A549 (cell line): ENCODE measurements at regions of chr1 and their contacts with region 1.

Region 1: DNA sequence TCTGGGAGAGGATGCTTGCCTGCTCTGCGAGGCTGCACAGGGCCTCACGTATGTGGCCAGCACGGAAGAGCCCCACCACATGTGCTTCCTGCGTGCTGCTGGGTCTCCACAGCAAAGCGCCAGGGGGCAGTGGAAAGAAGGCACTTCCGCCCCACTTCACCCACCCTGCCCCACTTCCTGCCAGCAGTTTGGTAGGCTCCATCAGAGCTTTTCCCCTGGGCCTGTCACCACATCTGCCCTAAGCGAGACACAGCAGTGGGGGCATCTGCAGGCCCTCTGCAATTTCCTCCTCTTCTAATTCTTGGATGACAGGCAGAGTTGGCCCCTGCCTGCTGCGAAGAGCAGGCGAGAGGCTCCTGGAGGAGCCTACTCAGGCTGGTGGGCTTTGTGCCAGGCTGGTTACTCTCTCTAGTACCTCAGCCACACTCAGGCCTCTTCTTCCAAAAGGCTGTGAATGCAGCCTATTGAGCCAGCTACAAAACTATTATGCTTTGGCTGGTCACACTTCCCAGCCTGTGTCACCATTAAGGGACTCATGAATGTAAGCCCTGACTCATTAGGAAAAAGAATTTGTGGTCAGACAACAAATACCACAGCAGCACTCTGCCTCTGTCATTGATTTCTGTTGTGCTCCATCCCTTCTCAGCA is 25.0 kb downstream of the CD244 start:
- DNase-seq: no peak
- ATAC-seq: no peak
- H3K4me3 ChIP-seq: no peak overlapping the region
- H3K27ac ChIP-seq: no peak overlapping the region
- H3K4me1 ChIP-seq: no peaks in the 10 kb centered on the region
- CTCF ChIP-seq: no peak
- EP300 ChIP-seq: no peak
- POLR2A ChIP-seq: no peak
- RAD21 ChIP-seq: no peak

Region 2: DNA sequence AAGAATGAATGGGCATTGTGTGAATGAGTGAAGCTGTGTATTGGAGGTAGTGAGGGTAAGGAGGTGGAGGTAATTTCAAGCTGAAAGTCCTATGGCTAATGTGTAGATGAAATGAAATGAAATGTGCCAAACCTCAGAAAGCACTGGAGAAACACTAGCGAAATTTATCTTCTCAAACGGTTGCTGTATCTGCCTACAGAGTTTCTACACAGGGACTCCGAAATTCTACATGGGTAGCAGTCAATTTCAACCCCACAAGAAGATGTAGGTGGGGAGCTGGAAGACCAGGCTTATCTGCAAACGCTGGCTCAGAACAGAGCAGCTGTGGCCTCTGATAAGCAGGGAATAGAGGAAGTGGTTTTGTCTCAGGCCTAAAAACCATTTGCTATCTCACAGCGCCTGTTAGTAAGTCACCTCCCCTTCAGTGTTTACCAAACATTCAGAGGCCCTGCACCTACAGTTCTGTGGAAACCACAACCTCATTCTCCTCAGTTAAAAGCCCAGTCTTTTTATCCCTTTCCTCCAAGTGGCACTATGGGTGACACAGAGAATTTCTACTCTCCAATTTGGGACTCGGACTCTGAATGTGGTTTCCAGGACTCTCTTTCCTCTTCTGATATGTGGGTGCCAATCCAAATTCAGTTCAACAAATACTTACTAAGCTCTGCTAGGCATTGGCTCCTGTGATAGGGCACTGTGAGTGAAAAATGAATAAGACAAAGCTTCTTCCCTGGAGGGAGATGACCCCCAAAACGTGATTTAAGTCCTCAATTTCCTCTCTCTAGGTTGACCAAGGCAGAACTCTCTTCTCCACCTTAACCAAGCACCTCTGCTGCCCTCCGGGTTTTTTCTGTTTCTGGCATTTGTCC is 297.5 kb before region 1 on chr1:
- CTCF ChIA-PET with region 1: no interaction called
- POLR2A ChIA-PET with region 1: no interaction called
- DNase-seq: no peak
- ATAC-seq: no peak
- H3K4me3 ChIP-seq: no peak overlapping the region
- H3K27ac ChIP-seq: peak overlapping the region; percentile 37 to 78; a peak in 5 of 6 replicates
- H3K4me1 ChIP-seq: peaks cover 48% of the 10 kb centered on the region
- CTCF ChIP-seq: no peak
- EP300 ChIP-seq: no peak
- POLR2A ChIP-seq: no peak
- RAD21 ChIP-seq: no peak

Region 3: GRCh38 chr1:160726498-160727315 is 111.0 kb before region 1 on chr1:
- CTCF ChIA-PET with region 1: interaction called, 13 read pairs
- POLR2A ChIA-PET with region 1: no interaction called
- DNase-seq: peak; percentile 81 to 86
- ATAC-seq: peak; percentile 89 to 94
- H3K4me3 ChIP-seq: no peak overlapping the region
- H3K27ac ChIP-seq: peak overlapping the region; percentile 26 to 68; a peak in 5 of 6 replicates
- H3K4me1 ChIP-seq: peaks cover 14% of the 10 kb centered on the region
- CTCF ChIP-seq: peak; percentile 91
- EP300 ChIP-seq: no peak
- POLR2A ChIP-seq: no peak
- RAD21 ChIP-seq: peak; percentile 92 to 94

Region 4: DNA sequence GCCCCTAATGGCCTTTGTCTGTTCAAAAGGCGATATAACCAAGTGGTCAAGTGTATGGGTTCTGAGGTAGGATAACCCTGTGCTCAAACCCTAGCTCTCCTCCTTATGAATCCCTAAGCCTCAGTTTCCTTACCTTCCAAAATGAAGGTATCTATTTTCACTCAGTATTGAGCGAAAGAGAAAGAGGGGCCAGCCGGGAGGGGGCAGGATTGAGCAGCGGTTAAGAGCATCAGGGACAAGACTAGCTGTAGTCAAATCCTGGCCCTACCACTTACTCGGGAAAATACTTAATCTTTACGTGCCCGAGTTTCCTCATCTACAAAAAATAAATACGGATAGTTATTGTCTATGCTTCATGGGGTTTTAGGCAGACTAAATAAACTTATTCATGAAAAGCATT is 16.1 kb before region 1 on chr1:
- CTCF ChIA-PET with region 1: interaction called, 23 read pairs
- POLR2A ChIA-PET with region 1: no interaction called
- DNase-seq: no peak
- ATAC-seq: no peak
- H3K4me3 ChIP-seq: no peak overlapping the region
- H3K27ac ChIP-seq: no peak overlapping the region
- H3K4me1 ChIP-seq: peaks cover 16% of the 10 kb centered on the region
- CTCF ChIP-seq: no peak
- EP300 ChIP-seq: no peak
- POLR2A ChIP-seq: no peak
- RAD21 ChIP-seq: no peak

Region 5: GRCh38 chr1:160935527-160936258 is 98.0 kb after region 1 on chr1:
- CTCF ChIA-PET with region 1: interaction called, 12 read pairs
- POLR2A ChIA-PET with region 1: no interaction called
- DNase-seq: no peak
- ATAC-seq: no peak
- H3K4me3 ChIP-seq: no peak overlapping the region
- H3K27ac ChIP-seq: no peak overlapping the region
- H3K4me1 ChIP-seq: peaks cover 10% of the 10 kb centered on the region; the same call in 2 of the 3 replicates
- CTCF ChIP-seq: no peak
- EP300 ChIP-seq: no peak
- POLR2A ChIP-seq: no peak
- RAD21 ChIP-seq: no peak